Activated naive CD4-positive, alpha-beta T cell treated with anti-CD3 and anti-CD28 coated beads, Interleukin-2, amount 10 ng/mL, durations not matched to agents 7 days and 5 days (primary cell): ENCODE measurements at regions of chr2 and their contacts with region 1.

Region 1: DNA sequence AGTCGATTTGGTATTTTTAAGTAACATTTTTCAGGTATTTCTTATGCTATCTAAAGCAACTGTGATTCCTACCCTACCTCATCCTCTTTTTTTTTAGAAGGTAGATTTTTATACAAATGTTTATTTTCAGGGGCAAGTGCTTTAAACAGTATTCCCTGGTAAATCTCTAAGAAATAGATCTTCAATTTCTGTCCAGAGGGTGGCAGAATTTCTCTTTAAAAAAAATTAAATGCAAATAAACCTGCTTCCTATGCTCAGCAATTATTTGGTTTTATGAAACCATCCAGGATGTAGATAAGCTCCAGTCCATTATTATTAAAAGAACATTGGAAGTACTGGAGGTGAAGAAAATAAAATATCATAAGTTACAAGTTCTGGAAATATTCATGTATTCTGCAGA is 191.9 kb downstream of the MYO3B start:
- DNase-seq: no peak
- H3K4me3 Mint-ChIP-seq: no peak overlapping the region
- H3K27ac Mint-ChIP-seq: no peak overlapping the region
- H3K4me1 Mint-ChIP-seq: peaks cover 36% of the 10 kb centered on the region
- H3K27me3 Mint-ChIP-seq: peaks cover 46% of the 10 kb centered on the region

Region 2: DNA sequence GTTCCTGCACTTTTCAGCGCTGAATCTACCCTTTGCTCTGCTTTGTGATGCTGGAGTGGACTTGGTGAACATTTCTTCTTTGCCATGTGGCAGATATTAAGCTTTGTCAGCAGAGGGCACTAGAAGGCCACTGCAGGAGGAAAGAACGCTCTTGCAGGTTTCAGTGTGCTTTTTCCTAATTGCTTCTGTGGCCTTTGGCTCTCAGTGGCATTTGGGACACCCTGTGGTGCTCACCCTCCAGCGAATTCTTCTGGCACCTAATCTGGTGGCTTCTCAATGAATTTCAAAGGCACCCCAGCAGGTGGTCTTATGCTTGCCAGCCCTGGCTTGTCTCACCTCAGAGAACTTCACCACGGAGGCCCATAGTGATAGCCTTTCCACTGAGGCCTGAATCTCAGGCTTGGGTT is 45.3 kb before region 1 on chr2:
- CTCF ChIA-PET with region 1: interaction called, 19 read pairs
- DNase-seq: peak; percentile 64
- H3K4me3 Mint-ChIP-seq: no peak overlapping the region
- H3K27ac Mint-ChIP-seq: no peak overlapping the region
- H3K4me1 Mint-ChIP-seq: no peaks in the 10 kb centered on the region
- H3K27me3 Mint-ChIP-seq: peaks cover 4% of the 10 kb centered on the region

Region 3: DNA sequence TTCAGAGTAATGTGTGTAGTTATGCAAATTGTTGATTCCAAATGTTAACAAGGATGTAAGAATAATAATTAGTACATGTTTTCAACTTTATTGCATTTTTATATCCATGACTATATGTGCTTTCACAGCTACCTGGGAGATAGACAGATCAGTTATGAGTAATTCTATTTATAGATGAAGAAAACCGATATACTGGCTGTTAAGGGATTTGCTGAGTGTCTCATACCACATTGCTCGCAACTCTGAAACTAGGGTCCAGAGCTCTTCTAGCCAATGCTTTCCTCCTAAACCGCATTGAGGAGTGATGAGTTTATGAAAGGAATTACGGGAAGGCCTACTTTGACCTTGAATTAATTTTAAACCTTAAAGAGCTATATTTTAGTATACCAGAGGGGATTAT is 10.4 kb after region 1 on chr2:
- CTCF ChIA-PET with region 1: interaction called, 17 read pairs
- DNase-seq: no peak
- H3K4me3 Mint-ChIP-seq: no peak overlapping the region
- H3K27ac Mint-ChIP-seq: no peak overlapping the region
- H3K4me1 Mint-ChIP-seq: no peaks in the 10 kb centered on the region
- H3K27me3 Mint-ChIP-seq: peaks cover 31% of the 10 kb centered on the region